HepG2 (cell line): ENCODE measurements at regions of chr19 and their contacts with region 1.

Region 1: DNA sequence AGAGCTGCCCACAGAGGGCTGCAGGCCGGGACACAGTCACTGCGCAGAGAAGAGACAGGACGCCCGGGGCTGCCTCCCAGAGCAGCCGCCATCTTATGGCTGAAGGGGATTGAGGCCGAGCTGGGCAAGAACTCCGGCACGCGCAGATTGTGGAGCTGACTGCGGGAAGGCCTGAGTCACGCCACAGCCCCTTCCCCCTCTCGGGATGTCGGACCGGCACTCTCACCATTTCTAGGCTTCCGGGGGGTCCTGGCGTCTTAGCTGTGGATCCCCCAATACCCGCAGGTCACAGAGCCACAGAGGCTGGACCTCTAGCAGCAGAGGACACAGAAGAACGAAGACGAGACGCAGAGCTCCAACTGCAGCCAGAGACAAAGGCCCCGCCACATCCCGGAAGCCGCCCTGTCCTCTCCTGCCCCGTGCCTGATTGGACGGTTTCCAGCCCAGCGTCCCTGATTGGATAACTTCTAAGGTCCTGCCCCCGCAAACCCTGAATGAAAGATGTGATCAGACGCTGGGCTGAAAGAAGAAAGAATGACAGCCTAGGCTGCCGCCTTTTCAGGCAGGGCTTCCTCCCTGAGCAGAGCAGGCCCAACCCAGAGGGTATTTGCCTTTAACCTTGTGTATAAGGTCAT is at the start of gene ZNF43:
- DNase-seq: peak; percentile 87
- ATAC-seq: peak; percentile 99
- H3K4me3 ChIP-seq: peak within 1 kb of the TSS; percentile 75 to 80 (median 77)
- H3K27ac ChIP-seq: peak within 1 kb of the TSS; percentile 92
- H3K4me1 ChIP-seq: no peaks in the 10 kb centered on the region
- H3K27me3 ChIP-seq: no peaks in the 10 kb centered on the region; a peak in 1 of 5 replicates
- CTCF ChIP-seq: no peak
- EP300 ChIP-seq: no peak
- POLR2A ChIP-seq: peak; percentile 71 to 87
- RAD21 ChIP-seq: no peak
- total RNA-seq, gene ZNF43: 8.5 and 10.4 TPM in 2 replicates

Region 2: GRCh38 chr19:21709464-21709863 is 126.5 kb before region 1 on chr19:
- CTCF ChIA-PET with region 1: no interaction called
- POLR2A ChIA-PET with region 1: no interaction called
- in situ Hi-C with region 1: no loop called
- intact Hi-C with region 1: no loop called
- DNase-seq: no peak
- ATAC-seq: no peak
- H3K4me3 ChIP-seq: no peak overlapping the region
- H3K27ac ChIP-seq: no peak overlapping the region
- H3K4me1 ChIP-seq: no peaks in the 10 kb centered on the region
- H3K27me3 ChIP-seq: no peaks in the 10 kb centered on the region
- CTCF ChIP-seq: no peak
- EP300 ChIP-seq: no peak
- POLR2A ChIP-seq: no peak
- RAD21 ChIP-seq: no peak

Region 3: GRCh38 chr19:21767065-21767800 is 68.7 kb before region 1 on chr19 and contains the start of gene ZNF100:
- CTCF ChIA-PET with region 1: no interaction called
- POLR2A ChIA-PET with region 1: interaction called, 11 read pairs
- in situ Hi-C with region 1: no loop called
- intact Hi-C with region 1: no loop called
- DNase-seq: peak; percentile 94
- ATAC-seq: peak; percentile 98
- H3K4me3 ChIP-seq: peak within 1 kb of the TSS; percentile 80 to 99 (median 90)
- H3K27ac ChIP-seq: peak within 1 kb of the TSS; percentile 88
- H3K4me1 ChIP-seq: peaks cover 18% of the 10 kb centered on the region
- H3K27me3 ChIP-seq: no peaks in the 10 kb centered on the region
- CTCF ChIP-seq: peak; percentile 23; the same call in 1 of the 2 replicates
- EP300 ChIP-seq: no peak
- POLR2A ChIP-seq: peak; percentile 70 to 85
- RAD21 ChIP-seq: no peak
- total RNA-seq, gene ZNF100: 11.4 and 16.1 TPM in 2 replicates

Region 4: GRCh38 chr19:21789466-21790080 is 46.4 kb before region 1 on chr19:
- CTCF ChIA-PET with region 1: no interaction called
- POLR2A ChIA-PET with region 1: no interaction called
- in situ Hi-C with region 1: no loop called
- intact Hi-C with region 1: no loop called
- DNase-seq: no peak
- ATAC-seq: no peak
- H3K4me3 ChIP-seq: no peak overlapping the region
- H3K27ac ChIP-seq: no peak overlapping the region
- H3K4me1 ChIP-seq: no peaks in the 10 kb centered on the region
- H3K27me3 ChIP-seq: no peaks in the 10 kb centered on the region
- CTCF ChIP-seq: no peak
- EP300 ChIP-seq: no peak
- POLR2A ChIP-seq: no peak
- RAD21 ChIP-seq: no peak

Region 5: DNA sequence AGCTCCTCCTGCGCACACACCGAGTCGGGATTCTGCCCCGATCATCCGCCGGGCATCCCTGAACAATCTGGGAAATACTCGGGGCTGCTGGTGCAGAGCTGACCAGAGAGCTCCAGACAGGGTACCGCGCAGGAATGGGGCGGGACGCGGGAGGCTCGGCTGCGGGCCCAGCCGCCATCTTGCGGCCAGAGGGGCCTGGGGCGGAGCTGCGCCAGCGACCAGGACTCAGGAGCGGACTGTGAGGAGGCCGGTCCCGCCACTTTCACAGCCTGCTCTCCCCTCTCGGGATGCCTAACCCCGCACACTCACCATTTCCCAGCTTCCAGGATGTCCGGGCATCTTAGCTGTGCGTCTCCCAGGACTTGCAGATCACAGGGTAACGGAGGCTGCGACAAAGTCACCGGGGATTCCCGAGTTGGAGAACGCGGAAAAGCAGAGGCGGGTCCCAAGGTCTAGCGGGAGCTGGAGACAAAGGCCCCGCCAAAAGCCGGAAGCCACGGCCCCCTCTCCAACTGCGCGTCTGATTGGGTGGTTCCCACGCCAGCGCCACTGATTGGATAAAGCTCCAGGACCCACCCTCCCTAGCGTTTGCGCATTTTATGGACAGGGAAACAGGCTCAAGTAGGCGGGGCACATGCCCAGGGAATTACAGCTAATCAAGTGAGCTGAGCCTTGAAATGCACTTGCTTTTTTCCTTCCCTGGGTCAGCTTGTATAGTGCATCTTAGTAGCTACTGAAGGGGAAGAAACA is 15.8 kb after region 1 on chr19:
- CTCF ChIA-PET with region 1: no interaction called
- POLR2A ChIA-PET with region 1: interaction called, 26 read pairs
- in situ Hi-C with region 1: no loop called
- intact Hi-C with region 1: no loop called
- DNase-seq: peak; percentile 81
- ATAC-seq: peak; percentile 98
- H3K4me3 ChIP-seq: peak overlapping the region; percentile 65 to 84 (median 65); a peak in 5 of 6 replicates
- H3K27ac ChIP-seq: peak overlapping the region; percentile 75
- H3K4me1 ChIP-seq: peaks cover 10% of the 10 kb centered on the region
- H3K27me3 ChIP-seq: no peaks in the 10 kb centered on the region; a peak in 1 of 5 replicates
- CTCF ChIP-seq: peak; percentile 26; the same call in 1 of the 2 replicates
- EP300 ChIP-seq: no peak
- POLR2A ChIP-seq: peak; percentile 26 to 49; a peak in 2 of 4 replicates
- RAD21 ChIP-seq: no peak